ENCODE measurements at regions of chr12 and their contacts with region 1.

Region 1: GRCh38 chr12:123580772-123581171 is 3.6 kb upstream of the TMED2 start:
- DNase-seq: no peak
- ATAC-seq: no peak
- H3K4me3 ChIP-seq: no peak overlapping the region
- H3K27ac ChIP-seq: peak overlapping the region in 3 of 10 donors; percentile 27 to 46 (median 44)
- H3K4me1 ChIP-seq: peaks cover 6 to 38% (median 32%) of the 10 kb centered on the region in 9 donors
- H3K27me3 ChIP-seq: no peaks in the 10 kb centered on the region
- CTCF ChIP-seq: no peak

Region 2: GRCh38 chr12:122917504-122918121 is 663.2 kb before region 1 on chr12:
- intact Hi-C with region 1: no loop called
- DNase-seq: peak; percentile 53 to 66
- ATAC-seq: peak; percentile 81 to 92 (median 88)
- H3K4me3 ChIP-seq: no peak overlapping the region
- H3K27ac ChIP-seq: peak overlapping the region; percentile 0 to 84 (median 72)
- H3K4me1 ChIP-seq: peaks cover 10 to 26% (median 19%) of the 10 kb centered on the region in 9 donors
- H3K27me3 ChIP-seq: no peaks in the 10 kb centered on the region
- CTCF ChIP-seq: no peak

Region 3: GRCh38 chr12:123271001-123271729 is 309.6 kb before region 1 on chr12:
- intact Hi-C with region 1: loop called in 1 of 10 experiments (anchors 2 kb)
- DNase-seq: peak; percentile 78 to 79
- ATAC-seq: peak; percentile 25 to 70 (median 52)
- H3K4me3 ChIP-seq: peak overlapping the region; percentile 63 to 95 (median 75)
- H3K27ac ChIP-seq: peak overlapping the region; percentile 54 to 90 (median 84)
- H3K4me1 ChIP-seq: peaks cover 3 to 43% (median 36%) of the 10 kb centered on the region in 9 donors
- H3K27me3 ChIP-seq: no peaks in the 10 kb centered on the region
- CTCF ChIP-seq: peak; percentile 18 to 76 (median 56)

Region 4: GRCh38 chr12:123365025-123365917 is 215.5 kb before region 1 on chr12:
- intact Hi-C with region 1: loop called in 1 of 10 experiments (anchors 5 kb)
- DNase-seq: peak; percentile 98
- ATAC-seq: peak; percentile 92 to 97 (median 96)
- H3K4me3 ChIP-seq: peak overlapping the region; percentile 85 to 98 (median 92)
- H3K27ac ChIP-seq: peak overlapping the region; percentile 86 to 99 (median 94)
- H3K4me1 ChIP-seq: peaks cover 3 to 37% (median 33%) of the 10 kb centered on the region in 9 donors
- H3K27me3 ChIP-seq: no peaks in the 10 kb centered on the region
- CTCF ChIP-seq: peak; percentile 54 to 92 (median 70)

Region 5: DNA sequence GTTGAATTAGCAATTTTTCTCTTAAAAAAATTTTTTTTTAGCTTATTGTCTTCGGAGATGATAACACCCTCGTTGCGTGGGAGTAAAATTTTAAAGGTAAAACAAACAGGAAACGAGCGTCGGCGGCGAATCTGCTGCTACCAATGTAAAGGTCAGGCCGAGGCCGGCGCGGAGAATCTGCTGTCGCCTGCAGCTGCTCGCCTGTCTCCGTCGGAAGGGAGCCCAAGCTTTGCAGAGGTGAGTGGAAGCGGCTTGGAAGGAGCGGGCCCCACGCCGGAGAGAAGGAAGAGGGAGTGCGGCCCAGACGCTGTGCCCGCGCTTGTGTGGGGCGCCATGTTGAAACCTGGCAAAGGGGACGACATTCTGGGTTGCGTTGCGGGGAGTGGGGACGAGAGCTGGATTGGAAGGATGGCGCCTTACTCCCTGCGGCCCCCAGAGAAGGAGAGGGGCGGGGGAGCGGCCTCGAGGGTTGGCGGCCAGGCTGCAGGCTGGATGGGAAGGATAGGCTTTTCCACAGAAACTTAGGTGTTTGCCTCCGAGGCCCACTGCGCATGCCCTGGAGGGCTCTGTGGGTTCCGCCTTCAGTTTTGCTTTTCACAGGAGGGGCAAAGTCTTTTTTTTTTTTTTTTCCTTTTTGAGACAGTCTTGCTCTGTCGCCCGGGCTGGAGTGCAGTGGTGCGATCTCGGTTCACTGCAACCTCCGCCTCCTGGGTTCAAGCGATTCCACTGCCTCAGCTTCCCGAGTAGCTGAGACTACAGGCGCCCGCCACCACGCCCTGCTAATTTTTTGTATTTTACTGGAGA is 122.6 kb before region 1 on chr12 and contains the start of gene SNRNP35:
- intact Hi-C with region 1: loop called in 3 of 10 experiments (anchors 5 kb)
- DNase-seq: peak; percentile 81 to 86
- ATAC-seq: peak; percentile 80 to 93 (median 91)
- H3K4me3 ChIP-seq: peak within 1 kb of the TSS; percentile 74 to 97 (median 86)
- H3K27ac ChIP-seq: peak within 1 kb of the TSS; percentile 96 to 100 (median 98)
- H3K4me1 ChIP-seq: peaks cover 0 to 29% (median 15%) of the 10 kb centered on the region in 9 donors
- H3K27me3 ChIP-seq: no peaks in the 10 kb centered on the region
- CTCF ChIP-seq: no peak
- total RNA-seq, gene SNRNP35: 18.0 to 32.4 (median 19.5) TPM

Region 6: DNA sequence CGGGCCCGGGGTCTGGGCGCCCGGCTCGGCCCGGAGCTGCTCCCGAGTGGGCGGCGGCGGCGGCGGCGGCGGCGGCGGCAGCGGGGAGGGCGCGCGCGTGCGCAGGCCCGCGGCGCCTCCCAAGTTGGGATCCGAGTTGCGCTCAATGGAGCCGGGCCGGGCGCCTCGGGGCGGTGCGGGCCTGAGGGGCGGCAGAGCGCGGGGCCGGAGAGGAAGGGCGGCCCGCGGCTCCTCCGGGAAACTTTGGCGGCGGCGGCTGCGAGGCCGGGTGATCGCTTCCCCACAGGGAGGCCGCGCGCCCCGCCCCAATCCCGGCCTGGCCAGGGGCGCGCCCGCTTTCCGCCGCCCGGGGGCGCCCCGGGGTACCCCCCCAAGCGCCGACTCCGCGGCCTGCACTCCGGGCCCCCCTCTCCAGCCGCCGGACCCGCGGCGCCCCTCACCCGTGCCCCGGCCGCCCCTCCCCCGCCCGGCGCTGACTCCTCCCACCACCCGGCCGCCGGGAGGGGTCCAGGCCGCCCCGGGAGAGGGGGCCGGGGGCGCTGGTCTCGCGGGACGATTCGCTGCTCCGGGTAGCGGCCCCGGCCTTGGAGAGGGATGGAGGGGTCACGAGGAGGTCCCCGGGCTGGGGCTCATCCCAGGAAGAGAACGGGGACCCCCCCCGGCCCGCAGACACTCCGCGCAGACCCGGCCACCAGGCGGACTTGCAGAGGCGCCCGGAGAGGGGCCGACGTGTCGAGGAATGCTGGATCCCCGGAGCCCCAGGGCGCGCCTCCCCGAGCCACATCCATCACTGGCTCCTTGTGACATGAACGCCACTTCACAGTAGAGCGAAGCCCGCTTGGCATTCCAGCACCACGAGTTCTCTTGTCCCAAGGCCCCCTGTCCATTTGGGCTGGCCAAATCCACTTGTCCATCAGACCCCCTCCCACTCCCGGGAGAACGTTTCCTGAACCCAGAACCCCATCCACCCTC is 46.8 kb before region 1 on chr12 and contains the start of gene RILPL1:
- intact Hi-C with region 1: loop called in 6 of 10 experiments (anchors 1 to 5 kb)
- DNase-seq: peak; percentile 40 to 62
- ATAC-seq: peak; percentile 46 to 88 (median 66)
- H3K4me3 ChIP-seq: peak within 1 kb of the TSS; percentile 56 to 96 (median 78)
- H3K27ac ChIP-seq: peak within 1 kb of the TSS; percentile 85 to 97 (median 93)
- H3K4me1 ChIP-seq: peaks cover 15 to 49% (median 32%) of the 10 kb centered on the region in 9 donors
- H3K27me3 ChIP-seq: peaks cover 0 to 22% (median 0%) of the 10 kb centered on the region in 7 donors
- CTCF ChIP-seq: peak in 7 of 9 donors; percentile 15 to 57 (median 48)
- total RNA-seq, gene RILPL1: 71.4 to 132 (median 86.6) TPM

Measured in heart right ventricle (tissue), 16 donors.